ENCODE measurements at regions of chr5 and their contacts with region 1.

Region 1: GRCh38 chr5:5787373-5787772 is 364.9 kb downstream of the ICE1 start:
- DNase-seq: no peak
- ATAC-seq: no peak
- H3K4me3 Mint-ChIP-seq: no peak overlapping the region
- H3K27ac Mint-ChIP-seq: no peak overlapping the region
- H3K4me1 Mint-ChIP-seq: peaks cover 10% of the 10 kb centered on the region
- H3K27me3 Mint-ChIP-seq: no peaks in the 10 kb centered on the region
- CTCF ChIP-seq: no peak

Region 2: DNA sequence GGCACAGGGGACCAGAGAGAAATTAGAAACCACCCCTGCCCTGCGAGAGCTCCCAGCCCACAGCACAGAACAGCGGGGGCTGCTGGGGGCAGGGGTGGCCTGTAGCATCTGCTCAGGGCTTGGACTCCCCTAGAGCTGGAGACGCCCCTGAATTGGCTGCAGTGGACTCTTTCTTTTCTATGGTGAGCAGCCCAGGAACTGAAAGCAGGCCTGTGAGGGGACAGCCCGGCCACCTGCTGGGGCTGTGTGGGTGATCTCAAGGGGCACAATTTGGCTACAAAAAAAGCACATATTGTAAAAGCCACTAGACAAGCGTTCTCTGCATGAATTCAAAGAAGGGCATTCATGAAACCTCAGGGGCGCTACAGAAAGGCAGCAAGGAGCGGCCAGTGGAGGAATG is 422.4 kb before region 1 on chr5:
- CTCF ChIA-PET with region 1: no interaction called
- POLR2A ChIA-PET with region 1: no interaction called
- intact Hi-C with region 1: no loop called
- DNase-seq: no peak
- ATAC-seq: no peak
- H3K4me3 Mint-ChIP-seq: no peak overlapping the region
- H3K27ac Mint-ChIP-seq: no peak overlapping the region
- H3K4me1 Mint-ChIP-seq: no peaks in the 10 kb centered on the region
- H3K27me3 Mint-ChIP-seq: no peaks in the 10 kb centered on the region
- CTCF ChIP-seq: no peak

Region 3: DNA sequence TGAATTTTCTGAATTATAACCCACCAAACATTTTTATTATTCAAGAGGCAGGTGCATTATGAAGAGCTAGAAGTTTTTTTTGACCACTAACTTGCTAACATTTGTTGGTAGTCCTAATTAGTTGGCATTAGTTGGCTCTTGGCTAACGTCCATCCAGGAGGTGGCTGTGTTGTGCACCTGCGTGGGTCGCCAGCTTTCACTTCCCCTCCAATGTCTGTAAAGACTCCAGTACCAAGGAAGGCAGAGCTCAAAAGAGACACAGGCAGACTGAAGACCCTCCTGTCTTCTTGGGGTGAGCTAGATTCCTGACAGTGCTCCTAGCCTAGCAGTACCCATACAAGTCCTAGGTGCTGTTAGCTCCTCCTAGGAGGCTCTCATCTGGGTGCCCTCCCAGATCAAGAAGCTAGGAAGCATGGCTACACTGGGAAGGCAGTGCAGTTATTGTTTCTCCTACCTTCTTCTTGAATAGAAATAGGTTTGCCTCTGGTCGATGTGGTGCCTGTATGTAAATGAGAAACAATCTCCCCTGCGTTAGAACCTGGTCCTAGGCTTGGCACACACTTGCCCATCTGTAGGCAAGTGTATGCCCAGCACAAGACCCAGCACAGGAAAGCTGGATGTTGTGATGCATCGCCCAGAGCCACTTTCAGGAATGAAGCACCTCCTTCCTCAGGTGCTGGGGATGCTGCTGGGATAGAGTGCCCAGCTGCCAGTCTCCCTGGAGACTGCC is 173.9 kb before region 1 on chr5:
- CTCF ChIA-PET with region 1: no interaction called
- POLR2A ChIA-PET with region 1: no interaction called
- intact Hi-C with region 1: loop called (anchors 10 kb)
- DNase-seq: no peak
- ATAC-seq: peak; percentile 34
- H3K4me3 Mint-ChIP-seq: no peak overlapping the region
- H3K27ac Mint-ChIP-seq: no peak overlapping the region
- H3K4me1 Mint-ChIP-seq: peaks cover 7% of the 10 kb centered on the region
- H3K27me3 Mint-ChIP-seq: no peaks in the 10 kb centered on the region
- CTCF ChIP-seq: no peak